PC-3 (cell line): ENCODE measurements at regions of chr10 and their contacts with region 1.

Region 1: DNA sequence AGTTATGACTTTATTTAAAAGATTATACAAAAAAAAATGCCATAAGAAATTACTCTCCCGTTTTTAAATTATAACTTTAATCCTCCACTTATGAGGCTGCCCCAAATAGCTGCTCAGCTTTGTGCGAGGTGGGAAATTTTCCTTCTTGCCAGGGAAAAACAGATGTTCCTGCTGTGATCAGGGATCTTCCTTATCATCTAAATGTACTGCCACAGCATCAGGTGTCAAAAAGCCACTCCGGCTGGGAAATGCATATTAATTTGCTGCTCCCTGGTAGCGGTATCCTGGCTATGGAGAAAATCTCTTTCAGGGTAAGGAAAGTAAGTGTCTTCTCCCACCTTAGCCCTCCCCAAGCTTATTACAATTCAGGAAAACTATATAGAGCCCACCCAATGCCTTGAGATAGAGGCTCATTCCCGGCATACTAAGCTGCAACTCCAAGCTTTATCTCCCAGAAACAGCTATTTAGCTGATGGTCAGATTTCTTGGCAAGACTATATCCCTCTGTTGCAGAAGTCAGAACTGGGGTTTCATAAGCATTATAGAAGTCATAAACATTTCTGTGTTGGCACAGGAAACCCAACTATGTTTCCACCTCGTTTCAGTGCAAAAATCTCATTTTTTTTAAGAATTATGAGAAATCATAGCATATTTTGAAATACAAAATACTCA is 360.4 kb downstream of the PARD3 start:
- DNase-seq: no peak
- ATAC-seq: no peak
- H3K4me3 ChIP-seq: no peak overlapping the region
- H3K27ac ChIP-seq: no peak overlapping the region
- H3K4me1 ChIP-seq: no peaks in the 10 kb centered on the region
- H3K27me3 ChIP-seq: no peaks in the 10 kb centered on the region
- CTCF ChIP-seq: no peak

Region 2: GRCh38 chr10:34434119-34434594 is 20.6 kb before region 1 on chr10:
- CTCF ChIA-PET with region 1: no interaction called
- POLR2A ChIA-PET with region 1: no interaction called
- intact Hi-C with region 1: loop called (anchors 2 kb)
- DNase-seq: no peak
- ATAC-seq: peak; percentile 50
- H3K4me3 ChIP-seq: no peak overlapping the region
- H3K27ac ChIP-seq: no peak overlapping the region
- H3K4me1 ChIP-seq: peaks cover 6% of the 10 kb centered on the region
- H3K27me3 ChIP-seq: no peaks in the 10 kb centered on the region
- CTCF ChIP-seq: no peak

Region 3: GRCh38 chr10:34467902-34468301 is 13.2 kb after region 1 on chr10:
- CTCF ChIA-PET with region 1: no interaction called
- POLR2A ChIA-PET with region 1: interaction called, 3 read pairs
- intact Hi-C with region 1: loop called (anchors 2 kb)
- DNase-seq: no peak
- ATAC-seq: no peak; the same call in 1 of the 2 replicates
- H3K4me3 ChIP-seq: no peak overlapping the region
- H3K27ac ChIP-seq: no peak overlapping the region
- H3K4me1 ChIP-seq: no peaks in the 10 kb centered on the region
- H3K27me3 ChIP-seq: no peaks in the 10 kb centered on the region
- CTCF ChIP-seq: no peak